ENCODE measurements at regions of chr4 and their contacts with region 1.

Region 1: GRCh38 chr4:101419324-101420135 is 72.2 kb upstream of the PPP3CA start:
- DNase-seq: no peak
- H3K4me3 Mint-ChIP-seq: no peak overlapping the region
- H3K27ac Mint-ChIP-seq: no peak overlapping the region
- H3K4me1 Mint-ChIP-seq: no peaks in the 10 kb centered on the region
- H3K27me3 Mint-ChIP-seq: no peaks in the 10 kb centered on the region
- CTCF ChIP-seq: no peak

Region 2: GRCh38 chr4:100816436-100817045 is 603.0 kb before region 1 on chr4:
- CTCF ChIA-PET with region 1: no interaction called
- intact Hi-C with region 1: no loop called
- DNase-seq: no peak
- H3K4me3 Mint-ChIP-seq: no peak overlapping the region
- H3K27ac Mint-ChIP-seq: no peak overlapping the region
- H3K4me1 Mint-ChIP-seq: no peaks in the 10 kb centered on the region
- H3K27me3 Mint-ChIP-seq: no peaks in the 10 kb centered on the region
- CTCF ChIP-seq: no peak

Region 3: DNA sequence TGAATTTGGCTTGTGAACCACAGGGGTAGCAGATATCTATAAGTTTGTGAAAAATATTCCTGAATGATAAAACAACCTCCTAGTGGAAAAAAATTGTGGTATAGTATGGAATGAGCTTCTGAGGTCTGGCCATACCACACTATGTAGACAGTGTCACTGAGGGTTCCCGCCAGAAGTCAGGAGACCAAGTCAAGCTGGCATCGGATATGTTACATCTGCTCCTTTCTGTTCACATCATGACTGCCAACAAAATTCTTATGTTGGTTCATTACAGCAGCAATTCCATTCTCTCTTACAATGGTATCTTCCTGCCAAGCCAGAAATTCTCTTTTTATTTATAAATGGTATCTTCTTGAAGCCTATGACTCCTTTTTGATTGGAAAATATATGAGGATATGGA is 345.2 kb before region 1 on chr4:
- CTCF ChIA-PET with region 1: no interaction called
- intact Hi-C with region 1: no loop called
- DNase-seq: no peak
- H3K4me3 Mint-ChIP-seq: no peak overlapping the region
- H3K27ac Mint-ChIP-seq: no peak overlapping the region
- H3K4me1 Mint-ChIP-seq: no peaks in the 10 kb centered on the region
- H3K27me3 Mint-ChIP-seq: no peaks in the 10 kb centered on the region
- CTCF ChIP-seq: no peak

Region 4: DNA sequence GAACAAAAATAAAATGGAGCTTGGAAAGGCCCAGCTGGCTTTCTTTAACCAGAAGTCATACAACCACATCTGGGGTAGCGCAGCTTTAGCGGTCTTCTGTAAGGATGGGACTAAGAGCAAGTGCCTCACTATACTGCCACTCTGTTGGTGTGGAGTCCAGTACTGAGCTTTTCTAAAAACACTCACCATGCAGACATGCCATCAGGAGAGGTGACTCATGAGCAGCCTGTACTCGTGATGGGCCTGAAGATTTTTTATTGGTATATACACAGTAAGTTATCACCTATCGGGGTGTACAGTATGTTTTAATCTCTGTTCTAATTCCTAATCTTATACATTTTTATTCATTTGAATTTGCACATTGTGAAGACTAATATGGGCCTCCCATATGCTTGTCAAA is 81.8 kb before region 1 on chr4:
- CTCF ChIA-PET with region 1: no interaction called
- intact Hi-C with region 1: no loop called
- DNase-seq: no peak
- H3K4me3 Mint-ChIP-seq: no peak overlapping the region
- H3K27ac Mint-ChIP-seq: no peak overlapping the region
- H3K4me1 Mint-ChIP-seq: peaks cover 28% of the 10 kb centered on the region
- H3K27me3 Mint-ChIP-seq: no peaks in the 10 kb centered on the region
- CTCF ChIP-seq: no peak

Region 5: DNA sequence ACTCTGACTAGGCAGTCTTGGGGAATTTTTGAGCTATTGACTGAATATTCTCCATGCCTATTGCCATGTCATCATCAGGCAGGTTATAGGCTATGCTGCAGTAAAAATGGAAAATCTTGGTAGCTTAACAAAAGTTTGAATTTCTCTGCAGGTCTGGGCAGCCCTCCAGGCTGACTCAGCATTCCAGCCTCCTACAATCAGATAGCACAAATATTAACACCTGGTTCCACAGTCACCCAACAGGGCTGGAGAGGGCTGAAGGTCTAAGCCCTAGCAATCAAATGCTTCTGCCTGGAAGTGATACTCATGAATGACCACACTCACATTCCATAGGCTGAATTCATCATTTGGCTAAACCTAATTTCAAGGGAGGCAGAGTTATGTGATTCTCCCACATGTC is 62.6 kb before region 1 on chr4:
- CTCF ChIA-PET with region 1: no interaction called
- intact Hi-C with region 1: loop called (anchors 10 kb)
- DNase-seq: peak; percentile 55
- H3K4me3 Mint-ChIP-seq: peak overlapping the region; percentile 45
- H3K27ac Mint-ChIP-seq: peak overlapping the region; percentile 68
- H3K4me1 Mint-ChIP-seq: peaks cover 41% of the 10 kb centered on the region
- H3K27me3 Mint-ChIP-seq: no peaks in the 10 kb centered on the region
- CTCF ChIP-seq: no peak